Activated CD4-positive, alpha-beta T cell treated with anti-CD3 and anti-CD28 coated beads for 36 hours (primary cell): ENCODE measurements at regions of chr14 and their contacts with region 1.

Region 1: DNA sequence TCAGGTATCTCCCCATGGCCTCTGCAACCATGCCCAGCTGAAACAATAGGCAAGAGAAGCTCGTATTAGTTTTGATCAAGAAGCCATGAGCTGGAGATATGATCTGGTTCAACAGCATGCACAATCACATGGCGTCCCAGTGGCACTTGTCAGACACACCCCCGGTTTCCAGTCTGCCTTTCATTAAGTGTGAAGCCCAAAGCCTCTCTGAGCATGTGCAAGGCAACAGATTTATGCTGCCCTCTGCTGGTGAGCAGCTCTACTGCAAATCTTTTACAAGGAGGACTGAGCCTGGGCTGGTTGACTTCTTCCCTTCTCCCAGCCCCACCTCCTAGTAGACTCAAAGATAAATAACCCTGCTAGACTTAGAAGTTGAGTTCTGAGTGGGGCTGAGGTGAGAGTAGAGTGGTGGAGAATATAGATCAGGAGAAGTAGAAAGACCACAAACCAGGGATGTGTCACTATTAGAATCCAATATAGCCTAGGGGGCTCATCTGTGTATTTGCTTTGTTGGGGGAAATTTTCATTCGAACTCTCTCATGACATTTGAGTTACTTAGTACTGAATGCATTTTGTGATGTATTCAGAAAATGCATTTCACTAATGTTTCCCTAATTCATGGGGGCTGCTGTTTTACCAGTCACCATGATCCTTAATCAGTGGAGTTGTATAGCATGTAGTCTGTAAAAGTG is 53.7 kb upstream of the MBIP start:
- DNase-seq: peak; percentile 84
- ATAC-seq: peak; percentile 84
- H3K4me3 Mint-ChIP-seq: no peak overlapping the region
- H3K27ac Mint-ChIP-seq: no peak overlapping the region
- H3K4me1 Mint-ChIP-seq: no peaks in the 10 kb centered on the region
- H3K27me3 Mint-ChIP-seq: peaks cover 5% of the 10 kb centered on the region

Region 2: GRCh38 chr14:36070031-36070719 is 304.0 kb before region 1 on chr14:
- CTCF ChIA-PET with region 1: interaction called, 48 read pairs
- POLR2A ChIA-PET with region 1: interaction called, 3 read pairs
- intact Hi-C with region 1: loop called (anchors 1 kb)
- DNase-seq: peak; percentile 75
- ATAC-seq: peak; percentile 74
- H3K4me3 Mint-ChIP-seq: no peak overlapping the region
- H3K27ac Mint-ChIP-seq: no peak overlapping the region
- H3K4me1 Mint-ChIP-seq: no peaks in the 10 kb centered on the region
- H3K27me3 Mint-ChIP-seq: peaks cover 19% of the 10 kb centered on the region

Region 3: GRCh38 chr14:36105401-36105800 is 268.7 kb before region 1 on chr14:
- CTCF ChIA-PET with region 1: interaction called, 4 read pairs
- POLR2A ChIA-PET with region 1: no interaction called
- intact Hi-C with region 1: loop called in 1 of 2 experiments (anchors 10 kb)
- DNase-seq: peak; percentile 4
- ATAC-seq: no peak
- H3K4me3 Mint-ChIP-seq: no peak overlapping the region
- H3K27ac Mint-ChIP-seq: no peak overlapping the region
- H3K4me1 Mint-ChIP-seq: no peaks in the 10 kb centered on the region
- H3K27me3 Mint-ChIP-seq: peaks cover 26% of the 10 kb centered on the region

Region 4: DNA sequence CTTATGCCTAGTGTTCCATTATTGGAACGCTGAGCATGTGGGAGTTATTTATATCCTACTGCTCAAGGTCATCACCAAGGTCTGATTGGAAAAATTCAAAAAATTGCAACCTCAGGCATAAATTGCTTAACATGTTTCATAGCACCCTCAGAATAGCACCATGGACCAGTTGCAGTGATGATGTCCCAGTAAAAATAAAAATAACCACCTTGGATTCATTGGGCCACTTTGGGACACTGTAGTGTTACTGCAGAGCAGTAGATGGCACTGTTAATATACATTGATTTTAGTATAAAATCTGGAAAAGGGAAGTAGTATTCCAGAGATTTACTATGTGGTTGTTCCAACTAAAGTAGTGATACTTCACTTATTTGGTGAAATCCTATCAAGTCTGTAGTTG is 166.6 kb before region 1 on chr14:
- CTCF ChIA-PET with region 1: interaction called, 4 read pairs
- POLR2A ChIA-PET with region 1: no interaction called
- intact Hi-C with region 1: loop called (anchors 1 to 2 kb)
- DNase-seq: no peak
- ATAC-seq: no peak
- H3K4me3 Mint-ChIP-seq: no peak overlapping the region
- H3K27ac Mint-ChIP-seq: no peak overlapping the region
- H3K4me1 Mint-ChIP-seq: peaks cover 6% of the 10 kb centered on the region
- H3K27me3 Mint-ChIP-seq: peaks cover 6% of the 10 kb centered on the region

Region 5: DNA sequence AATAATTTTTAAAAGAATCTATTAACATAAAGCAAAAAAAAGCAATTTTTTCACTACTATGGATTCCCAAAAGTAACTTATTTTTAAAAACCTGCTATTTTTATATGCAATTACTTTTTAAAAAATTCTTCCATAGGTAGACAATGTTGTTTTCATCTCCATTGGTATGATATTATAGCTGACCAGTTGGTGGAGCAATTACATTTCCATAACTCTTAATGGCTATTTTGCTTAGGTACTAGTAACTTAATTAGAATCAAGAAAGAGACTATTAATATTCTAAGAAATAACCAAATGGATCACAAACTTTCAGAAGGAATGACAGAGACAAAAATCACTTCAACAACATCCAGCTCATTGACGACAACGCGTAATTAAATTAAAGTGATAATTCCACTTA is 132.9 kb before region 1 on chr14:
- CTCF ChIA-PET with region 1: interaction called, 9 read pairs
- POLR2A ChIA-PET with region 1: no interaction called
- intact Hi-C with region 1: loop called (anchors 1 to 2 kb)
- DNase-seq: no peak
- ATAC-seq: no peak
- H3K4me3 Mint-ChIP-seq: no peak overlapping the region
- H3K27ac Mint-ChIP-seq: no peak overlapping the region
- H3K4me1 Mint-ChIP-seq: peaks cover 3% of the 10 kb centered on the region
- H3K27me3 Mint-ChIP-seq: peaks cover 24% of the 10 kb centered on the region

Region 6: DNA sequence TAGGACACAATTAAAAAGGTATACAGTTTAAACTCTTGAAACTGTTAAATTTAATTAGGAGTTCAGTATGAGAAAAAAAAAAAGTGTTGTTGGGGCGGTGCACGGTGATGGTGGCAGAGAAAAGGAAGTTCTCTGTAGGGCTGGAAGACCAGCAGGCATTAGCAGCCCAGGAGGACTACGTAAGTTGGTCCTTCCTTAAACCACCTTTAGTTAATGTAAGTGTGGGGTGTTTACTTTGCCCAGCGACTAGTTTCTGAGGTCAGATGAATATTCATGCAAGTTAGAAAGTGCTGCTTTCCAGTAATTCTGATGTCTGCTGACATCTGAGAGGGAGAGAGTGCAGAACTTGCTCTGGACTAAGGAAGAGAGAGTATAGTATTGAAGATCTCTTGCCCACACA is 91.0 kb after region 1 on chr14:
- CTCF ChIA-PET with region 1: no interaction called
- POLR2A ChIA-PET with region 1: no interaction called
- intact Hi-C with region 1: no loop called
- DNase-seq: no peak
- ATAC-seq: no peak
- H3K4me3 Mint-ChIP-seq: no peak overlapping the region
- H3K27ac Mint-ChIP-seq: no peak overlapping the region
- H3K4me1 Mint-ChIP-seq: no peaks in the 10 kb centered on the region
- H3K27me3 Mint-ChIP-seq: peaks cover 26% of the 10 kb centered on the region